ENCODE measurements at regions of chr15 and their contacts with region 1.

Region 1: GRCh38 chr15:73284090-73284716 is 84.6 kb downstream of the HCN4 start:
- H3K4me3 ChIP-seq: no peak overlapping the region
- H3K27ac ChIP-seq: no peak overlapping the region
- H3K4me1 ChIP-seq: no peaks in the 10 kb centered on the region
- CTCF ChIP-seq: no peak

Region 2: DNA sequence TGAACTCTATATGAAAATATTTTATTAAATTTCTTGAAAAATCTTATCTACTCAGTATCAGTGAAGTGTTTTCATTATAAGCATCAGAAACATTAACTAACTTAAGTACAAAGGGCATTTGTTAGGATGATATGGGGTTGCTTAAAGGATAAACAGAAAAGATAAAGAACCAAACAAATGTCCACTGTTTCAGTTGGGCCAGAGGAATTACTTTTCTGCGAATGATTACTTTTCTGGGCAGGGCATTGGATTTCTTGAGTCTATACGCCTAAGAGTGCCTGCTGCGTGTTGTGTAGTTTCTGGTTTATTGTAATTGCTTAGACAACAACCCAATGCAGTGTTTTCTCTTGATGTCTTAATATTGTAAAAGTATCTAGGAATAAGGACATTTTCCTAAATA is 179.1 kb before region 1 on chr15:
- CTCF ChIA-PET with region 1: no interaction called
- POLR2A ChIA-PET with region 1: no interaction called
- H3K4me3 ChIP-seq: no peak overlapping the region
- H3K27ac ChIP-seq: no peak overlapping the region
- H3K4me1 ChIP-seq: no peaks in the 10 kb centered on the region
- CTCF ChIP-seq: no peak

Region 3: GRCh38 chr15:73258271-73259108 is 25.7 kb before region 1 on chr15:
- CTCF ChIA-PET with region 1: no interaction called
- POLR2A ChIA-PET with region 1: no interaction called
- H3K4me3 ChIP-seq: no peak overlapping the region
- H3K27ac ChIP-seq: no peak overlapping the region
- H3K4me1 ChIP-seq: no peaks in the 10 kb centered on the region
- CTCF ChIP-seq: no peak

Region 4: GRCh38 chr15:73273181-73274002 is 10.8 kb before region 1 on chr15:
- CTCF ChIA-PET with region 1: interaction called, 25 read pairs
- POLR2A ChIA-PET with region 1: no interaction called
- H3K4me3 ChIP-seq: no peak overlapping the region
- H3K27ac ChIP-seq: no peak overlapping the region
- H3K4me1 ChIP-seq: no peaks in the 10 kb centered on the region
- CTCF ChIP-seq: peak; percentile 52; the same call in 1 of the 2 replicates